Activated CD4-positive, alpha-beta T cell treated with anti-CD3 and anti-CD28 coated beads for 36 hours (primary cell): ENCODE measurements at regions of chr1 and their contacts with region 1.

Region 1: DNA sequence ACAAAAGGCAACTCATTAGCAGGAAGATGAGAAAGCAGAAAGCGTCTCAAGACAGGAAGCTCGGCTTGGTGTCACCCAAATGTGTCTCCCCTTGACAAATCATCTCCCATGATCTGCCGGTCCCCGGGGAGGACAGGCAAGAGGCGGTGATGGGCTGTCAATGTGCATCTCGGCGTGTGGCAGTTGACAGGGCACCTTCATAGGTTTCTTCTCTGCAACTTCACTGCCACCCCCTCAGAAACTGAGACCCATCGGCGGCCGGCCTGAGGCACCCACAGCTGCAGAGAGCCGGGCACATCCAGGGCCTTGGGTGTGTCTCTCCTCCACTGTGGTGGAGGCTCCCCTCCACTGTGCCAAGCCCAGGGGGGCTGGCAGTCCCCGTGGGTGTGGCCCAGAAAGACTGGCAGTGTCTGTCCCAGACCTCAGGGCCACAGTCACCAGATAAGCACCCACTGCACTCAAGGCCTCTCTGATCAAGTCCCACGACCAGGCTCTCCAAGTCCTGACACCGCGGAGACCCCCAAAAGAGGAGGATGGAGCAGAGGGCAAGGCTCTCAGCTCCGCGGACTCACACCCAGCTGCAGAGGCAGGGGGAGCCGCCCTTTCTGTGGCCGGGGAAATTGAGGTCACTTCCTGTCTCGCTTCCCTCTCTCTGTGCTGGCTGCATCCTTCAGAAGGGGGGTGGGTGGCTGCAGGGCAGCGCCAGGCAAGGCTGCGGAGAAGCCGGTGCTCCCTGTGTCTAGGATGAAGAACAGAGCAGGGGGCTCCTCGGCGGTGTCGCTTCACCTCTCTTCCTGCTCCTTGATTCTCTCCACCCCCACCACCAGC is 39.6 kb upstream of the LBR start:
- DNase-seq: peak; percentile 90
- ATAC-seq: peak; percentile 90
- H3K4me3 Mint-ChIP-seq: peak overlapping the region; percentile 85
- H3K27ac Mint-ChIP-seq: peak overlapping the region; percentile 98
- H3K4me1 Mint-ChIP-seq: peaks cover 25% of the 10 kb centered on the region
- H3K27me3 Mint-ChIP-seq: no peaks in the 10 kb centered on the region

Region 2: GRCh38 chr1:225146478-225146877 is 320.9 kb before region 1 on chr1:
- CTCF ChIA-PET with region 1: no interaction called
- POLR2A ChIA-PET with region 1: no interaction called
- intact Hi-C with region 1: no loop called
- DNase-seq: no peak
- ATAC-seq: no peak
- H3K4me3 Mint-ChIP-seq: no peak overlapping the region
- H3K27ac Mint-ChIP-seq: no peak overlapping the region
- H3K4me1 Mint-ChIP-seq: no peaks in the 10 kb centered on the region
- H3K27me3 Mint-ChIP-seq: no peaks in the 10 kb centered on the region

Region 3: GRCh38 chr1:225441314-225442122 is 25.9 kb before region 1 on chr1:
- CTCF ChIA-PET with region 1: interaction called, 8 read pairs
- POLR2A ChIA-PET with region 1: interaction called, 31 read pairs
- intact Hi-C with region 1: loop called (anchors 1 kb)
- DNase-seq: no peak
- ATAC-seq: no peak
- H3K4me3 Mint-ChIP-seq: no peak overlapping the region
- H3K27ac Mint-ChIP-seq: peak overlapping the region; percentile 82
- H3K4me1 Mint-ChIP-seq: peaks cover 49% of the 10 kb centered on the region
- H3K27me3 Mint-ChIP-seq: no peaks in the 10 kb centered on the region

Region 4: DNA sequence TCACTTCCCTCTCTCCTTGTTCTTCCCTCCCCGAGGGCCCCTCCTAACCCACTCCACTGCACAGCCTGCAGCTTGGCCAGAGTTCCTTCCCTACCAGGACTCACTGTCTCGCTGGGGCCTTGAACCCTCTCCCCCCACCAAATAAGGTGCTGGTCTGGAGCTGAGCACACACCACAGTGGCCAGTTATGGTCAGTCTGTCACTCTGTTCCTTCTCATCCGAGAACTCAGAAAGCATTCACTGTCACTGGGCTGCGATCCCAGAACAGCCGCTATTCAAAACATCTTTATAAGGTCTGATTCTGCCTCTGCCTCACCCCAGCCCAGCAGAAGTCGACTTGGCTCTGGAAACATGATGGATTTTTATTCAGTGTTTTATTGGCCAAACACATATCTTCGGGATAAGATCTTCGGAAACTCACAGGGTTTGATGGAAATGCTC is 19.7 kb before region 1 on chr1:
- CTCF ChIA-PET with region 1: interaction called, 8 read pairs
- POLR2A ChIA-PET with region 1: interaction called, 31 read pairs
- intact Hi-C with region 1: loop called (anchors 1 kb)
- DNase-seq: peak; percentile 1
- ATAC-seq: no peak
- H3K4me3 Mint-ChIP-seq: no peak overlapping the region
- H3K27ac Mint-ChIP-seq: peak overlapping the region; percentile 21
- H3K4me1 Mint-ChIP-seq: peaks cover 55% of the 10 kb centered on the region
- H3K27me3 Mint-ChIP-seq: no peaks in the 10 kb centered on the region

Region 5: DNA sequence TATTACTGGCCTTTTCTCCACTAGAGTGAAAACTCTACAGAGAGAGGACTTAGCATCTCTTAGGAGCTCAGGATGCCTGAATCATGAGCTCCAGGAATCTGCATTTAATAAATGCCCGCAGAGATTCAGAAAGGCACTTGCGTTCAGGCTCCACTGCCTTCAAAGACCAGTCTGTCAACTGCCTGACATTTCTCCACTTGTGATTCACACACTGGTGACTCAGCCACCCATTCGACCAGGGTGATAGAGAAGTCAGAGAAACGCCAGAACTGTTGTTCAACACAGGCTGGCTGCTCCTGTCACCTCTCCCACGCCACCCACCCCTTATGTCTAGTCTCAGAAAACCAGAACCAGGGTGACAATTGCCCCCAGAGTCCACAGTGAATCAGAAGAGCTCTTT is 12.7 kb before region 1 on chr1:
- CTCF ChIA-PET with region 1: interaction called, 7 read pairs
- POLR2A ChIA-PET with region 1: interaction called, 7 read pairs
- intact Hi-C with region 1: loop called in 1 of 2 experiments (anchors 1 kb)
- DNase-seq: peak; percentile 91
- ATAC-seq: peak; percentile 98
- H3K4me3 Mint-ChIP-seq: peak overlapping the region; percentile 44
- H3K27ac Mint-ChIP-seq: peak overlapping the region; percentile 79
- H3K4me1 Mint-ChIP-seq: peaks cover 42% of the 10 kb centered on the region
- H3K27me3 Mint-ChIP-seq: no peaks in the 10 kb centered on the region

Region 6: GRCh38 chr1:225923692-225924555 is 456.5 kb after region 1 on chr1 and contains the start of gene PYCR2:
- CTCF ChIA-PET with region 1: interaction called, 3 read pairs
- POLR2A ChIA-PET with region 1: no interaction called
- intact Hi-C with region 1: loop called in 1 of 2 experiments (anchors 1 kb)
- DNase-seq: peak; percentile 97
- ATAC-seq: peak; percentile 97
- H3K4me3 Mint-ChIP-seq: peak within 1 kb of the TSS; percentile 93
- H3K27ac Mint-ChIP-seq: peak within 1 kb of the TSS; percentile 96
- H3K4me1 Mint-ChIP-seq: peaks cover 54% of the 10 kb centered on the region
- H3K27me3 Mint-ChIP-seq: no peaks in the 10 kb centered on the region
- total RNA-seq, gene PYCR2: 106 to 126 TPM